ENCODE measurements at regions of chr19 and their contacts with region 1.

Region 1: DNA sequence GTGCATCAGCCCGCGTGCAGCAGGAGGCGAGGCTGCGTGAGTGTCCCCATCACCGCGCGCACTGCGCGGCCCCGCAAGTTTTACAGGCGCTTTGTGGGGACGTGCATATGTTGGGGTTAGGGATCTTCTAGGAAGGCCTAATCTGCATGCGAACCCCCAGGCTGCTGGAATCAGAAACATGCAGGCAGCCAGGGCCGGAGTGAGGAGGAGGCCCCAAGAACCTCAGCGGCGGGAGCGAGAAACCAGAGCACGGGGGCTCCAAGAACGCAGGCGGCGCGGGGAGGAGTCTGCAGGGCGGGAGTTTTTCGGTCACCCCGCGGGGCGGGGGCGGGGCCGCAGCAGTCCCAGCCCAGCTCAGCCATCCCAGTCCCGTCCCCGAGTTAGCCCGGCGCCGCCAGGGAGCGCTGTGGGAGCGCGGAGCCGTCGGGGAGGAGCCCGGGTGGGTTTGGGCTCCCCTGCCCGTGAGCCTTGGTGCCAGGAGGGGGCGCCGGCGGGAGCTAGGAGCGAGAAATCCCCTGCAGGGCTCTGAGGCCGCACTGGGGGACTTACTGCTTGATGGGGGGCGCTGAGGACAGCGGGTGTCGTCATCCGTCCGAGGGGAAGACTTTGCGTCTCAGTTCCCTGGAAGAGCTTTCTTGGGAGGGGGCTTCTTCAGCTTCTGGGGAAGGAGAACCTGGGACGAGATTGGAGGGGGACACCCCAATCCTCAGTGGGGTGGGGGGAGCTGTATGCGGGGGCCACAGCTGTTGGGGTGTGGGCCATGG is 933 bp upstream of the NRTN start:
- DNase-seq: peak; percentile 95
- H3K4me3 Mint-ChIP-seq: peak overlapping the region; percentile 69
- H3K27ac Mint-ChIP-seq: no peak overlapping the region
- H3K4me1 Mint-ChIP-seq: no peaks in the 10 kb centered on the region
- H3K27me3 Mint-ChIP-seq: peaks cover 28% of the 10 kb centered on the region
- CTCF ChIP-seq: peak; percentile 91

Region 2: DNA sequence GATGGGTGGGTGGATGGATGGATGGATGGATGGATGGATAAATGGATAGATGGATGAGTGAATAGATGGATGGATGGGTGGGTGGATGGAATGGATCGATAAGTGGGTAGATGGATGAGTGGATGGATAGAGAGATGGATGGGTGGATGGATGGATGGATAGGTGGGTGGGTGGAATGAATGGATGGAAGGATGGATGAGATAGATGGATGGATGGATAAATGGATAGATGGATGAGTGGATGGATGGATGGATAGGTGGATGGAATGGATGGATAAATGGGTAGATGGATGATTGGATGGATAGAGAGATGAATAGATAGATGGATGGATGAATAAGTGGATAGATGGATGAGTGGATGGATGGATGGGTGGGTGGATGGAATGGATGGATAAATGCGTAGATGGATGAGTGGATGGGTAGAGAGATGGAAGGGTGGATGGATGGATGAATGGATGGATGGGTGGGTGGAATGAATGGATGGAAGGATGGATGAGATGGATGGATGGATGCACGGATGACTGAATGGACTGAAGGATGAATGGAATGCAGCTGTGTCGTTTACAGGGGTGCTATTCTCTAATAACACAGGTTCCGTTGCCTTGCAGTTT is 41.2 kb before region 1 on chr19:
- CTCF ChIA-PET with region 1: interaction called, 16 read pairs
- intact Hi-C with region 1: no loop called
- DNase-seq: no peak
- H3K4me3 Mint-ChIP-seq: no peak overlapping the region
- H3K27ac Mint-ChIP-seq: no peak overlapping the region
- H3K4me1 Mint-ChIP-seq: no peaks in the 10 kb centered on the region
- H3K27me3 Mint-ChIP-seq: peaks cover 11% of the 10 kb centered on the region
- CTCF ChIP-seq: no peak

Region 3: DNA sequence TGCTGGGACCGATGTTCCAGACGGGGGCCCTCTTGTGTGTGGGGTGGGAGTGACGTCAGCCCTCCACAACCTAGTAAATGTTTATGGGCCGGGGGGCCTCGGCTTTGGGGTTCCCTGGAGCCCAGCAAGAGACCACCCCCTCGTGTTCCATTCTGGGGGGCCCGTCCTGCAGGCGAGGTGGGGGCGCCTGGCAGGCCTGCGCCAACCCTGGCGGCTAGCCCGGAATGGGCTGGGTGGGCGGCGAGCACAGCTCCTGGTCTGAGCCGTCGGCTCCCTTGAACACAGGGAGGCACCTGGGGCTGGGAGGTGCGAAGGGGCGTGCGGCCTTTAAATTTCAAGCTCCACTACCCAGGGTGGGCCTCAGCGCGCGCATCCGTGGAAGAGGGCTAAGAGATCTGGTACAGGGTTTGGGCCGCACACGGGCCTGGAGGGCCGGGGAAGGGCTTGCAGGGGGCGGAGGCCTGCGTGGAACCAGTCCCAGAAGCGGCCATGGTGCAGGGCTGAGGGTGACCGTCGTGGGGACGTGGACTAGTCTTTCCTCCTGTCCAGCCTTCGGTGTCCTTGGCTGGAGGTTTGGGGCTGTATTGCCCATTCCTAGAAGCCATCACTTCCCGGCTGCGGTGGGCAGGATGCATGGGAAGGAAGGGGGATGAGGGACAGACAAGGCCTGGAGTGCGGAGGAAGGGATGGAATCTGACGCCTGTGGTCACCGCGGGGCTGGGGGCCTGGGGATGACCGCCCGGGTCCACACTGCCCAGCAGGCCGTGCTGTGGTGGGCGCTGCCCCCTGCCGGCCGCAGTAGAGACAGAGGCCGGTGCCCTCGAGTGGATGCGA is 88.2 kb after region 1 on chr19:
- CTCF ChIA-PET with region 1: interaction called, 15 read pairs
- intact Hi-C with region 1: loop called (anchors 5 kb)
- DNase-seq: peak; percentile 62
- H3K4me3 Mint-ChIP-seq: no peak overlapping the region
- H3K27ac Mint-ChIP-seq: peak overlapping the region; percentile 45
- H3K4me1 Mint-ChIP-seq: no peaks in the 10 kb centered on the region
- H3K27me3 Mint-ChIP-seq: peaks cover 13% of the 10 kb centered on the region
- CTCF ChIP-seq: peak; percentile 57

Region 4: DNA sequence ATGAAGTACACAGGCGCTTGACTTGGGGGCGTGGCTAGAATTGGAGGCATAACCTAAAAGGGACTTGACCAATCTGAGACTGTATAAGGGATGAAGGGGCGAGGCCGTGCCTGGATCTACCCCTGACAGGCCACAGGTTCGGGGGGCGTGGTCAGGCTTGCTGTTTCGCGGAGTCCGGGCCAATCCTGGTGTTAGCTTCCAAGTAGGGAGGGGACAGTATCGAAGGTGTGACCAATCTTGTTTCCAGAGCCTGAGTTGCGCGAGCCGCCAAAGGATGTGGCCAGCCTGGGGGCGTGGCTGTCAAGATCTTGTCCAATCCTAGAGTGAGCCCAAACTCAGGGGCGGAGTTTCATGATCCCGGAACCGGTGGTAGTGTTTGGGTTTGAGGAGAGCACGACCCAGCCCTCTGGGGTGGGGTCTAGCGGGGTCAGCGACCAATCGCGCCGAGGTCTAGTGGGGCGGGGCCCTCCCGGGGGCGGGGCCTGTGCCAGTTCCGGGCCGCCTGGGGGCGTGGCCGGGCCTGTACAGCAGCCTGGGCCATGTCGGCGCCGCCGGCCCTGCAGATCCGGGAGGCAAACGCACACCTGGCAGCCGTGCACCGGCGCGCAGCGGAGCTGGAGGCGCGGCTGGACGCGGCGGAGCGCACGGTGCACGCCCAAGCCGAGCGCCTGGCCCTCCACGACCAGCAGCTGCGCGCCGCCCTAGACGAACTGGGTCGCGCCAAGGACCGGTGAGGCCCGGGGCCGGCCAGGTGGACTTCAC is 100.6 kb after region 1 on chr19 and contains the start of gene VMAC:
- CTCF ChIA-PET with region 1: interaction called, 26 read pairs
- intact Hi-C with region 1: no loop called
- DNase-seq: peak; percentile 98
- H3K4me3 Mint-ChIP-seq: peak within 1 kb of the TSS; percentile 90
- H3K27ac Mint-ChIP-seq: peak within 1 kb of the TSS; percentile 92
- H3K4me1 Mint-ChIP-seq: peaks cover 8% of the 10 kb centered on the region
- H3K27me3 Mint-ChIP-seq: no peaks in the 10 kb centered on the region
- CTCF ChIP-seq: no peak
- total RNA-seq, gene VMAC: 4.3 and 5.5 TPM in 2 replicates

Measured in Calu3 (cell line).